Right lobe of liver (tissue), 6 donors: ENCODE measurements at regions of chr19 and their contacts with region 1.

Region 1: GRCh38 chr19:43555185-43555770 is 20.0 kb downstream of the XRCC1 start:
- DNase-seq: peak; percentile 64 to 76 (median 70)
- ATAC-seq: peak; percentile 79 to 95 (median 92)
- H3K4me3 ChIP-seq: no peak overlapping the region
- H3K27ac ChIP-seq: no peak overlapping the region
- H3K4me1 ChIP-seq: no peaks in the 10 kb centered on the region
- H3K27me3 ChIP-seq: no peaks in the 10 kb centered on the region
- CTCF ChIP-seq: peak; percentile 60 to 76 (median 74)
- POLR2A ChIP-seq: no peak

Region 2: GRCh38 chr19:43651758-43652545 is 96.7 kb after region 1 on chr19:
- intact Hi-C with region 1: loop called in 1 of 2 experiments (anchors 10 kb)
- DNase-seq: peak in 2 of 3 donors; percentile 46 to 59
- ATAC-seq: peak; percentile 88 to 93 (median 92)
- H3K4me3 ChIP-seq: no peak overlapping the region
- H3K27ac ChIP-seq: no peak overlapping the region
- H3K4me1 ChIP-seq: peaks cover 0 to 6% (median 0%) of the 10 kb centered on the region in 4 donors
- H3K27me3 ChIP-seq: no peaks in the 10 kb centered on the region
- CTCF ChIP-seq: peak; percentile 64 to 84 (median 78)
- POLR2A ChIP-seq: no peak